ENCODE measurements at regions of chr2 and their contacts with region 1.

Region 1: DNA sequence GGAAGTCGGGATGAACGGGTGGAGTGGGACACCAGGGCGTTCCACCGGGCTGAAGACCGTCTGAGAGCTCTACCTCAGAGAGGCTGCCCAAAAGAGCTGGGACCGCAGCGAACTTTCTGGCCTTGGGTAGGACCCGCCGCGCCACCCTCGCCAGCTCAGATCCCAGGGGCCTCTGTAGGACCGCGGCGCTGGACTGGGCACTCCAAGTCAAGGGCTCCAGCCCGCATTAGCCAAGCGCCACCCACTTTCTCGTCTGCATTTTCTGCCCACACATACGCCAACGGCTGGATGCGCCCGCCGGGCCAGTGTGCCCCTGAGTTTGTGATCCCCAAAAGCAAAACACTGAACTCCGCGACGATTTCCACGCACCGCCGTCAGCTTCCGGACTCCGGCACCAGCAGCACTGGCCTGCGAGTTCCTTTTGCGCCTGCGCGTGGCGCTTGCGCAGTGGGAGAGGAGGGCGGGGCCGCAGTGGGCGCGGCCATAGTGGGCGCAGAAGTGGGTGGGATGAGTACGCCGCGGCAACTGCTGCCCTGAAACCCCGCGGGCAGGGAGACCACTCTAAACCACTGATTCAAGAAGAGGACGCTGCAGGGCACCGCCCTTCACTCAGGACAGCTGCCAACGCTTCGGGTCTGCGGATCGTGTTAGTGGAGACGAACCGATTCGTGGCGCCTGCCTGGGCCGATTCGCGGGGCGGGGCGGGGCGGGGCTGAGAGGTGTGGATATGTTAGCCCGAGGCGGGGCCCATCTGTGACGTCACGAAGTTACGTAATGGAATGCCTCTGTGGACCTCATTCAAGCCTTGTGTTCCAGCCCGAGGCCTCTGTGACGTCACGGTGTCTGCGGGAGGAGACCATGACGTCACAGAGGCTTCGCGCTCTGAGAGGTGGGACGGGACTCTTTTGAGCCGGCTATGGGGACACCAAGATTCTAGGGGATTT is 10.5 kb downstream of the OSR1 start:
- DNase-seq: peak; percentile 97 to 100 (median 98)
- H3K4me3 ChIP-seq: peak overlapping the region; percentile 72 to 83
- H3K4me3 Mint-ChIP-seq: peak overlapping the region; percentile 96 to 99 (median 98)
- H3K27ac ChIP-seq: peak overlapping the region; percentile 92
- H3K27ac Mint-ChIP-seq: peak overlapping the region; percentile 97 to 100 (median 98)
- H3K4me1 ChIP-seq: peaks cover 38% of the 10 kb centered on the region
- H3K4me1 Mint-ChIP-seq: peaks cover 13 to 45% (median 29%) of the 10 kb centered on the region in 4 donors
- H3K27me3 ChIP-seq: peaks cover 23% of the 10 kb centered on the region
- H3K27me3 Mint-ChIP-seq: peaks cover 24 to 35% of the 10 kb centered on the region in 2 donors

Region 2: GRCh38 chr2:18560031-18560796 is 787.7 kb before region 1 on chr2 and contains the start of gene RDH14:
- CTCF ChIA-PET with region 1: interaction called, 5 read pairs
- POLR2A ChIA-PET with region 1: interaction called, 27 read pairs
- intact Hi-C with region 1: loop called (anchors 1 kb)
- DNase-seq: peak; percentile 90 to 94 (median 91)
- H3K4me3 ChIP-seq: peak within 1 kb of the TSS; percentile 11 to 67
- H3K4me3 Mint-ChIP-seq: peak within 1 kb of the TSS; percentile 90 to 98 (median 94)
- H3K27ac ChIP-seq: peak within 1 kb of the TSS; percentile 92
- H3K27ac Mint-ChIP-seq: peak within 1 kb of the TSS; percentile 95 to 98 (median 97)
- H3K4me1 ChIP-seq: peaks cover 29% of the 10 kb centered on the region
- H3K4me1 Mint-ChIP-seq: peaks cover 24 to 48% (median 34%) of the 10 kb centered on the region in 4 donors
- H3K27me3 ChIP-seq: no peaks in the 10 kb centered on the region
- H3K27me3 Mint-ChIP-seq: no peaks in the 10 kb centered on the region
- total RNA-seq, gene RDH14: 18.0 to 19.1 TPM

Region 3: GRCh38 chr2:19474128-19474527 is 126.2 kb after region 1 on chr2:
- CTCF ChIA-PET with region 1: no interaction called
- POLR2A ChIA-PET with region 1: no interaction called
- intact Hi-C with region 1: loop called (anchors 5 kb)
- DNase-seq: peak; percentile 71 to 80 (median 77)
- H3K4me3 ChIP-seq: peak overlapping the region in 1 of 2 donors; percentile 16
- H3K4me3 Mint-ChIP-seq: peak overlapping the region; percentile 18 to 70 (median 61)
- H3K27ac ChIP-seq: no peak overlapping the region
- H3K27ac Mint-ChIP-seq: peak overlapping the region in 6 of 7 donors; percentile 10 to 59 (median 48)
- H3K4me1 ChIP-seq: peaks cover 24% of the 10 kb centered on the region
- H3K4me1 Mint-ChIP-seq: peaks cover 16 to 26% (median 18%) of the 10 kb centered on the region in 4 donors
- H3K27me3 ChIP-seq: no peaks in the 10 kb centered on the region
- H3K27me3 Mint-ChIP-seq: peaks cover 13 to 18% of the 10 kb centered on the region in 2 donors

Region 4: DNA sequence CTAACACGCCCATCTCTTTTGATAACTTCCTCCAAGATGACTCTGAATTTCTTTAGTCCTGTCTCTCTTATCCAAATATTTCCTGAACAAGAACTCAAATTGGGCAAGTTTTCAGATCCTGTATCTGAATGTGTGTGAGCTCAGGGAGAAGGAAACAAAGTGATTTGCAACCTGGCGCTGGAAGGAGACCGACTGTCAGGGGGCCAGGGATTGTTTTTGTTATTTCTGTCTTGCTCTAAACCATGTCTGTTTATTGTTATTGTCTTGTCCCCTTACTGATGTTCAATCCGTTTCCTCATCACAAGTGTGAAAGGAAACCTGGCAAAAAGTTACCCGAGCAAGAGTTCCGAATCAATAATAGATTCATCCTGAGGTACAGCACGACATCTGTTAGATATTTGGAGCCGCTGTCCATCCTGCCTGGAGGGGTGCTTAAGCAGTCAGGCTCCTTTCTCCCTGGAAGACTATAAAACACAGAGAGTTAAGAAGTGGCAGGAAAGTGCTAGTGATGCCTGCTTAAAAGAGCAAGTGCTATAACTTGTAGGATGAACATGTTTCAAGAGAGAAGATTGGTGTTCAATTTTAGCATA is 143.1 kb after region 1 on chr2:
- CTCF ChIA-PET with region 1: no interaction called
- POLR2A ChIA-PET with region 1: no interaction called
- intact Hi-C with region 1: no loop called
- DNase-seq: no peak
- H3K4me3 ChIP-seq: no peak overlapping the region
- H3K4me3 Mint-ChIP-seq: no peak overlapping the region
- H3K27ac ChIP-seq: no peak overlapping the region
- H3K27ac Mint-ChIP-seq: no peak overlapping the region
- H3K4me1 ChIP-seq: no peaks in the 10 kb centered on the region
- H3K4me1 Mint-ChIP-seq: no peaks in the 10 kb centered on the region
- H3K27me3 ChIP-seq: no peaks in the 10 kb centered on the region
- H3K27me3 Mint-ChIP-seq: peaks cover 16 to 20% of the 10 kb centered on the region in 2 donors

Region 5: GRCh38 chr2:19868705-19869580 is 521.1 kb after region 1 on chr2:
- CTCF ChIA-PET with region 1: interaction called, 4 read pairs
- POLR2A ChIA-PET with region 1: interaction called, 14 read pairs
- intact Hi-C with region 1: loop called (anchors 1 kb)
- DNase-seq: peak; percentile 66 to 71 (median 68)
- H3K4me3 ChIP-seq: peak overlapping the region; percentile 25 to 62
- H3K4me3 Mint-ChIP-seq: peak overlapping the region; percentile 94 to 99 (median 94)
- H3K27ac ChIP-seq: peak overlapping the region; percentile 35
- H3K27ac Mint-ChIP-seq: peak overlapping the region; percentile 87 to 97 (median 96)
- H3K4me1 ChIP-seq: peaks cover 20% of the 10 kb centered on the region
- H3K4me1 Mint-ChIP-seq: peaks cover 14 to 35% (median 27%) of the 10 kb centered on the region in 4 donors
- H3K27me3 ChIP-seq: no peaks in the 10 kb centered on the region
- H3K27me3 Mint-ChIP-seq: no peaks in the 10 kb centered on the region

Region 6: GRCh38 chr2:19989681-19990415 is 642.0 kb after region 1 on chr2 and contains the start of gene WDR35:
- CTCF ChIA-PET with region 1: no interaction called
- POLR2A ChIA-PET with region 1: interaction called, 4 read pairs
- intact Hi-C with region 1: loop called (anchors 2 kb)
- DNase-seq: peak; percentile 80 to 89 (median 86)
- H3K4me3 ChIP-seq: peak within 1 kb of the TSS; percentile 57 to 68
- H3K4me3 Mint-ChIP-seq: peak within 1 kb of the TSS; percentile 86 to 96 (median 90)
- H3K27ac ChIP-seq: peak within 1 kb of the TSS; percentile 57
- H3K27ac Mint-ChIP-seq: peak within 1 kb of the TSS; percentile 77 to 95 (median 93)
- H3K4me1 ChIP-seq: peaks cover 16% of the 10 kb centered on the region
- H3K4me1 Mint-ChIP-seq: peaks cover 11 to 28% (median 21%) of the 10 kb centered on the region in 4 donors
- H3K27me3 ChIP-seq: no peaks in the 10 kb centered on the region
- H3K27me3 Mint-ChIP-seq: peaks cover 9 to 11% of the 10 kb centered on the region in 2 donors
- total RNA-seq, gene WDR35: 5.5 to 5.7 TPM

Region 7: GRCh38 chr2:20097879-20098714 is 750.2 kb after region 1 on chr2:
- CTCF ChIA-PET with region 1: no interaction called
- POLR2A ChIA-PET with region 1: no interaction called
- intact Hi-C with region 1: loop called (anchors 1 kb)
- DNase-seq: peak; percentile 65 to 72 (median 70)
- H3K4me3 ChIP-seq: no peak overlapping the region
- H3K4me3 Mint-ChIP-seq: no peak overlapping the region
- H3K27ac ChIP-seq: no peak overlapping the region
- H3K27ac Mint-ChIP-seq: peak overlapping the region in 1 of 7 donors; percentile 28
- H3K4me1 ChIP-seq: no peaks in the 10 kb centered on the region
- H3K4me1 Mint-ChIP-seq: peaks cover 0 to 4% (median 0%) of the 10 kb centered on the region in 4 donors
- H3K27me3 ChIP-seq: no peaks in the 10 kb centered on the region
- H3K27me3 Mint-ChIP-seq: peaks cover 10 to 14% of the 10 kb centered on the region in 2 donors

Measured in CD4-positive, alpha-beta memory T cell (primary cell).